ENCODE measurements at regions of chr4 and their contacts with region 1.

Region 1: DNA sequence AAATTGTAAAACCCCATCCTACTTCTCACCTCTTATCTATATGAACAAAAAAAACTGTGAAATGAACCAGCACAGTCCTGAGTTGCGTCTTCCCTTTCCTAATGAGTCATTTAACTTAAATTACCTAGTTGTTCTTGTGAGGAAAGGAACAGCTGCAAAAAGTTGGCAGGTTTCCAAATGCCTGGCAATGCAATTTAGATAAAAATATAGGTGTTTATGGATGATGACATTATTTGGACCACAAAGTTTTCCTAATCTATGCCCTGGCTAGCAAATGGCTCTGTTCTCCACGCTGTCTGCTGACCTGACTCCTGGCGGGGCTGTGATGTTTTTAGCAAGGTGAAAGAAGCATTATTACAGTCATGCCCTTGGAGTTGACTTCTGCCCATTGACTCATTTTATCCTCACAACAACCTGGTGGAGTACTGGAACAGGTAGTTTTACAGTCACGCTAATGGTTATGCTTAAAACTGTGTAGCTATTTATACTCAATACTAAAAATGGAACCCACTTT is 29.8 kb upstream of the RELL1 start:
- DNase-seq: no peak
- ATAC-seq: peak in 1 of 2 donors; percentile 83

Region 2: GRCh38 chr4:37431417-37431743 is 284.6 kb before region 1 on chr4:
- intact Hi-C with region 1: no loop called
- DNase-seq: no peak
- ATAC-seq: no peak

Region 3: DNA sequence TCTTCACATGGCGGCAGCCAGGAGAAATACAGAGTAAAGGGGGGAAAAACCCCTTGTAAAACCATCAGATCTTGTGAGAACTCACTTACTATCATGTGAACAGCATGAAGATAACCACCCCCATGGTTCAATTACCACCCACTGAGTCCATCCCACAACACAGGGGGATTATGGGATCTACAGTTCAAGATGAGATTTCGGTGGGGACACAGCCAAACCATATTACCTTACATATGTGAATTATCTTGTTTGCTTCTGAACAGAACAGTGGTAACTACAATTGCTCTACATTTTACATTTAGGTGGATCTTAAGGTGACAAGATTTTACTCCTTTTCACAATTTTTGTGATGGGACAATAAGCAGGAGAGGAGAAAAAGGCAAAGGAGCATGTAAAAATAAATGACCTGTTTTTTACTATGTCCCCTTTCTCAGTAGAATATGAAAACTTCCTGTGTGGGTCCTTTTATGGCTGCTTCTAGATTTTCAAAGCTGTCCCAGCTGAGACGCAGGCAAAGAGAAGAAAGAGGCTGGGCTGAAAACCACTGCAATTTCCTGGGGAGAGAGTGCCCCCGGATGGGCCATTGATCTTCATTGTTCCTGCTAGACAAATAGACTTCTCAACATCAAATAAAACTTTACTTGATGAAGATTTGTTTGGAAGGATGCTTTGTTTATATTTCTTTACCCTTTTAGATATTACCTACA is 64.7 kb after region 1 on chr4:
- intact Hi-C with region 1: loop called in 1 of 2 experiments (anchors 10 kb)
- DNase-seq: no peak
- ATAC-seq: peak in 1 of 2 donors; percentile 49

Measured in left cardiac atrium (tissue), 4 donors.